Activated CD8-positive, alpha-beta T cell treated with anti-CD3 and anti-CD28 coated beads for 36 hours (primary cell): ENCODE measurements at regions of chr14 and their contacts with region 1.

Region 1: GRCh38 chr14:85788470-85789233 is 258.7 kb downstream of the FLRT2 start:
- DNase-seq: no peak
- ATAC-seq: no peak
- H3K4me3 Mint-ChIP-seq: no peak overlapping the region
- H3K27ac Mint-ChIP-seq: no peak overlapping the region
- H3K4me1 Mint-ChIP-seq: peaks cover 7% of the 10 kb centered on the region
- H3K27me3 Mint-ChIP-seq: peaks cover 9% of the 10 kb centered on the region
- CTCF ChIP-seq: no peak

Region 2: DNA sequence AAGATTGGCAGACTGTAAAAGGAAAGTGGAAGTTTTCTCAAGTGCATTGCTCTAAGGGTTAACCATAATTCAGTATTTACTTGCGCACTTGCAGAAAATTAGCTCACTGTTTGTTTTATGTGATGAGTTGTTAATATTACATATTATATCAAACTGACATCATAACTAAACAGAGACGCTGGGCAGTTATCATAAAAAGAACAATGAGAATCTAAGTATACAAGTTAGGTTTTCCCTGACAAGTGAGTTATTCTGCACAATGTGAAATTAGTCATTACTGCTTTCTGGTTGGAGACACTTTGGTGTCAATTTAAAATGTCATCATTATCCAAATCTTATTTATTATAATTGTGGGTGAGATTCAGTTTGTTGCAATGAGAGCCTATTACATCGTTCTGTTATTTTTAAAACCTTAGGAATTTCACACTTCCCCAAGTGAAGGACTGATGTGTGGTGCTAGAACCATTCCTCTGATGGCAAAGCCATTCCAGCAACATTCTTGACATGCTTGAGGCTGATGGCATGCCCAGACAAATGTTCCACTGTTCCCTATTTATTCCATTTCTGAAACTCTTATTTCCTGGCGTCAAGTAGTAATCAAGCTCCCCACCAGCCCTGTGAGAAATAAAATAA is 348.8 kb before region 1 on chr14:
- CTCF ChIA-PET with region 1: no interaction called
- POLR2A ChIA-PET with region 1: no interaction called
- intact Hi-C with region 1: loop called (anchors 10 kb)
- DNase-seq: no peak
- ATAC-seq: no peak
- H3K4me3 Mint-ChIP-seq: no peak overlapping the region
- H3K27ac Mint-ChIP-seq: no peak overlapping the region
- H3K4me1 Mint-ChIP-seq: no peaks in the 10 kb centered on the region
- H3K27me3 Mint-ChIP-seq: no peaks in the 10 kb centered on the region
- CTCF ChIP-seq: no peak